ENCODE measurements at regions of chr9 and their contacts with region 1.

Region 1: DNA sequence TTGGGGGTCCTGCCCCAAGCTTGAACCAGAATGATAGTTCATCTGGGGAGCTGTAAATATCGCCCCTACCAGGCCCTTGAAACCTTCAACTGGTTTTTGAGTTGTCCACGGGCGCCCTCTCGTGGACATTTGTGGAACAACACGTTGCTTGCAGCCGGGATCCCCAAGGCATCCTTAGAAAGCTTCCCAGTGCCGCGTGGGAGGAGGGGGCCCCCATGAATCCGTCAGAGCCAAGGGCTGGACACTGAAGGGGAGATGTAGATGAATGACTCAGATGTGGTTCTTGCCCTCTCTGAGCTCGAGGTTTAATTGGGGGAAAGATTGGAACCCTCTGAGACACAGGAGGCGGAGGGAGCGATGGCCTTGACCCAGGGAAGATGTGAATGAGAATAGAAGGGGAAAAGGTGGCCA is 31.8 kb upstream of the ORM1 start:
- DNase-seq: peak in 1 of 2 experiments; percentile 70
- H3K4me3 ChIP-seq: no peak overlapping the region
- H3K27ac ChIP-seq: no peak overlapping the region
- H3K4me1 ChIP-seq: no peaks in the 10 kb centered on the region
- H3K27me3 ChIP-seq: peaks cover 9% of the 10 kb centered on the region; the same call in 1 of the 2 replicates
- CTCF ChIP-seq: peak; percentile 98

Region 2: DNA sequence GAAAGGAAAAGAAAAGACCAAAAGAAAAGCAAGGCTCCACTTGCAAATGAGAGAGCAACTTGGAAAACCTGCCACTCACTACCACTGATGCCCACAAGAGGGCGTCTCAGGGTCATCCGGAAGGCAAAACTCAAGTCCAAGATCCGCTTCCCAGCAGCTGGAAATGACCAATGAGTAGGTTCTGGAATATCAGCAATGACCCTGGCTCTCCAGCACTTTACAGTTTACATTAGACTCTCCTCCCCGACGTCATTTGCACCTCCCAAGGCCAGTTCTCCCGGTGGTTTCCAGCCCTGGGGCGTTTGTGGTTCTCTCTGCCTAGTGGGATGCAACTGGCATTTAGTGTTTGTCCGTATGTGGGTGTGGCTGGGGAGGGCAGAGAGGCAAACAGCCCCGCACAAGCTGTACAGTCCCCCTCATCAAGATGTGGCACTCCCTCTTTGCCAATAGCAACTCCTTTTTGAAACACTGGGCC is 608.7 kb before region 1 on chr9:
- CTCF ChIA-PET with region 1: no interaction called
- POLR2A ChIA-PET with region 1: no interaction called
- intact Hi-C with region 1: no loop called
- DNase-seq: peak in 1 of 2 experiments; percentile 70
- H3K4me3 ChIP-seq: no peak overlapping the region
- H3K27ac ChIP-seq: no peak overlapping the region
- H3K4me1 ChIP-seq: no peaks in the 10 kb centered on the region
- H3K27me3 ChIP-seq: peaks cover 88% of the 10 kb centered on the region
- CTCF ChIP-seq: peak; percentile 90

Region 3: GRCh38 chr9:113737517-113738271 is 553.4 kb before region 1 on chr9:
- CTCF ChIA-PET with region 1: no interaction called
- POLR2A ChIA-PET with region 1: no interaction called
- intact Hi-C with region 1: loop called (anchors 2 kb)
- DNase-seq: peak in 1 of 2 experiments; percentile 26
- H3K4me3 ChIP-seq: no peak overlapping the region
- H3K27ac ChIP-seq: no peak overlapping the region
- H3K4me1 ChIP-seq: no peaks in the 10 kb centered on the region
- H3K27me3 ChIP-seq: peaks cover 55% of the 10 kb centered on the region; the same call in 1 of the 2 replicates
- CTCF ChIP-seq: peak; percentile 80

Region 4: GRCh38 chr9:114082017-114082762 is 208.9 kb before region 1 on chr9:
- CTCF ChIA-PET with region 1: interaction called, 6 read pairs
- POLR2A ChIA-PET with region 1: no interaction called
- intact Hi-C with region 1: loop called (anchors 1 kb)
- DNase-seq: peak; percentile 64 to 81
- H3K4me3 ChIP-seq: no peak overlapping the region
- H3K27ac ChIP-seq: no peak overlapping the region
- H3K4me1 ChIP-seq: no peaks in the 10 kb centered on the region
- H3K27me3 ChIP-seq: peaks cover 44% of the 10 kb centered on the region
- CTCF ChIP-seq: peak; percentile 91

Region 5: DNA sequence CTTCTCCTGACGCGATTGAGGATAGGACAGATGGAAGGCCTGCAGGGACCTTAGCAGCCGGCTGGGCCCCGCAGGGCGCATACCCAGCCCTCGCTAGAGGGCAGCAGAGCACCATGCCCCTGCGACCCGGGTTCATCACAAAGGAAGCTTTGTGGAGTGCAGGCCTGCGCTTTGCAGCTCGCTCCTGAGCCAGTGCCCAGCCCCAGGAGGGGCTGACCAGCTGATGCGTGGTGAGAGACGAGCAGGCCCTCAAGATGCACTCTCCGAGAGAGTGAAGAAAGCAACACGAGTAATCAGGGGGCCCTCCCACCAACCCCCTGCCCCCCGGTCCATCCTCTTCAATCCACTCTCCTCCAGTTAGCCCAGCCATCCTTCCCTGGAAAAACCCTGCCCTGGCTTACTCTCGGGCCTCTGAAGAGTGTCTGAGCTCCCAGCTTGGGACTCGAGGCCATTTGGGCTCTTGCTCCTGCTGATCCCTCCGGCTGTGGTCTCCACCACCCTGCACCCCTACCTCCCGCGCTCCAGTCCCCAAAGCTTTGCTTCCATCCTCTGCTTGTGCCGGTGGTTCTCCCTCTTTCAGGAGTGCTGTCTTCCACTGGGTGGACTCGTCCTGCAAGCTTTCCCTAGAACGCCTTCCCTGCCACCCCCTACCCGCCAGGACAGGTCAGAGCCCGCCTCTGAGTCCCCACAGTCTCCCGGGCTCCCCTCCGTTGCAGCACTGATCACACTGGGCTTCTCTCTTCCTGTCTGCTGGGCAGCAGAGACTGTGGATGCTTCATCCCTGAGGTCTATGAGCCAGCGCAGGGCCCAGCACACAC is 182.8 kb before region 1 on chr9:
- CTCF ChIA-PET with region 1: interaction called, 18 read pairs
- POLR2A ChIA-PET with region 1: no interaction called
- intact Hi-C with region 1: loop called (anchors 1 kb)
- DNase-seq: peak in 1 of 2 experiments; percentile 74
- H3K4me3 ChIP-seq: no peak overlapping the region
- H3K27ac ChIP-seq: no peak overlapping the region
- H3K4me1 ChIP-seq: no peaks in the 10 kb centered on the region
- H3K27me3 ChIP-seq: peaks cover 53% of the 10 kb centered on the region
- CTCF ChIP-seq: peak; percentile 81

Region 6: GRCh38 chr9:114155263-114155972 is 135.7 kb before region 1 on chr9 and contains the start of gene COL27A1:
- CTCF ChIA-PET with region 1: interaction called, 5 read pairs
- POLR2A ChIA-PET with region 1: no interaction called
- intact Hi-C with region 1: loop called (anchors 1 kb)
- DNase-seq: peak in 1 of 2 experiments; percentile 82
- H3K4me3 ChIP-seq: peak within 1 kb of the TSS; percentile 57
- H3K27ac ChIP-seq: no peak within 1 kb of the TSS
- H3K4me1 ChIP-seq: no peaks in the 10 kb centered on the region
- H3K27me3 ChIP-seq: peaks cover 9% of the 10 kb centered on the region; the same call in 1 of the 2 replicates
- CTCF ChIP-seq: peak; percentile 90
- total RNA-seq, gene COL27A1: 0.39 and 0.83 TPM in 2 replicates

Region 7: DNA sequence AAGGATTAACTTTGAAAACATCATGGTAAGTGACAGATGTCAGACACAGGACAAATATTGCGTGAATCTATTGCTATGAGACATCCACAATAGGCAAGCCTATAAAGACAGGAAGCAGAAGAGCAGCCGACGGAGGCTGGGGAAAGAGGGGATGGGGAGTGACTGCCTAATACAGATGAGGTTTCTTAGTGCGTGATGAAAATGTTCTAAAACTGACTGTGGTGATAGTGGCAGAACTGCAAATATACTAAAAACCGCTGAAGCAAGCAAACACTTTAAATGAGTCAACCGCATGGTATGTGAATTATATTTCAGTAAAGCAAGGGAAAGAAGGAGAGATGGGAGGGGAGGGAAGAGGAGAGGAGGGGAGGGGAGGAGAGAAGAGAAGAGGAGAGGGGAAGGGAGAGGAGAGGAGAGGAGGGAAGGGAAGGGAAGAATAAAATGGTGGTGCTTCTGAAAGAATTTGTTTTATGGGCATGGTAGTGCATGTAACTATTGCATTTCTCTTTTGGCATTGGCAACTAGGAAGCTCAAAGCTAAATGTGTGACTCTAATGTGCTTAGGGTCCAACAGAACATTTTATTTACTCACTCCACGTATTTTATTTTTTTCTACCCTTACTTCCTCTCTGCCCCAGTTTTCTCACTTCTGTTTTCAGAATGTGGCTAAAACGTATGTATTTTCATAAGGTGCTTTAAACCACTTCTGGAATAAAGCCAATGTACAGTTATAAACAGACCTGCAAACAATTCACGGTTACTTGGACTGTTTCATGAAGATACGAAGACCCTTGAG is 75.5 kb after region 1 on chr9:
- CTCF ChIA-PET with region 1: no interaction called
- POLR2A ChIA-PET with region 1: no interaction called
- intact Hi-C with region 1: no loop called
- DNase-seq: peak in 1 of 2 experiments; percentile 68
- H3K4me3 ChIP-seq: no peak overlapping the region
- H3K27ac ChIP-seq: peak overlapping the region; percentile 12; the same call in 1 of the 2 replicates
- H3K4me1 ChIP-seq: peaks cover 38% of the 10 kb centered on the region
- H3K27me3 ChIP-seq: no peaks in the 10 kb centered on the region
- CTCF ChIP-seq: no peak